Activated CD4-positive, alpha-beta T cell treated with anti-CD3 and anti-CD28 coated beads, Interleukin-2, amount 10 ng/mL, durations not matched to agents 7 days and 5 days (primary cell): ENCODE measurements at regions of chr1 and their contacts with region 1.

Region 1: GRCh38 chr1:207797229-207797961 is 45.5 kb downstream of the CD46 start:
- DNase-seq: peak; percentile 83
- H3K4me3 Mint-ChIP-seq: no peak overlapping the region
- H3K27ac Mint-ChIP-seq: no peak overlapping the region
- H3K4me1 Mint-ChIP-seq: peaks cover 35% of the 10 kb centered on the region
- H3K27me3 Mint-ChIP-seq: no peaks in the 10 kb centered on the region

Region 2: GRCh38 chr1:207628776-207629175 is 168.6 kb before region 1 on chr1:
- CTCF ChIA-PET with region 1: no interaction called
- POLR2A ChIA-PET with region 1: no interaction called
- DNase-seq: no peak
- H3K4me3 Mint-ChIP-seq: no peak overlapping the region
- H3K27ac Mint-ChIP-seq: no peak overlapping the region
- H3K4me1 Mint-ChIP-seq: no peaks in the 10 kb centered on the region
- H3K27me3 Mint-ChIP-seq: peaks cover 2% of the 10 kb centered on the region

Region 3: DNA sequence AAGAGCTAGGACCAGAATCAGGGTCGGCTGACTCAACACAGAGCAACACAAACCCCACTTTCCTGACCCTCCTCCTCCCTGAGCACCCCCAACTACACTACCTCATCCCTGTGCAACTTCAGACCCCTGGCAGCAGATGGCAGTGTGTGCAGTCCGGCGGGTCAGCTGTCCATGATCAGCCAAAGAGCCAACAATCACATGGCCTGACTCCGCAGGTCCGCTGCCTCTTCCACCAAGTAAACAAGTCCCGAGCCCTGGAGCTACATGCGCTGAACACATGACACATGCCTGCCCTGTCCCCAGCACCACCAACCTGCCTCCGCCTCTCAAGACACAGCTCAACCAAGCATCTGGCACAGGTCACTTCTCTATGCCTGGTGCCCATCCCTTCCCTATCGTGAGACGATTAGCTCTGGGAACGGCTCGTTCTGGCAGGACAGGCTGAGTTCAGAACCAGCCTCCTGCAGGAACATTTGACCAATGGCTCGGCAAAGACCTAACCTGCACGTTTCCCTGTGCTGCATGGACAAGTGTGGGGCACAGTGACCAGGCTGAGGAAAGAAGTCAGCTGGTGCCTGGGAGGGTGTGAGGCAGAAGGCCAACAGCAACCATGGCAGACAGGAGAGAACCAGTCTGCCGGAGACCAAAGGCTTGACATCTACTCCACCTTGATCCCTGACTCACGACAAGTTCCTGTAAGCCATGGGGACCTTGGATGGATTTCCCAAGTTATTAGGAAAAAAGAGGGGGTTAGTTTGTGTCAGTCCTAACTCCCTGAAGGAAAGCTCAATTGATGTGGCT is 14.7 kb after region 1 on chr1:
- CTCF ChIA-PET with region 1: interaction called, 24 read pairs
- POLR2A ChIA-PET with region 1: no interaction called
- DNase-seq: no peak
- H3K4me3 Mint-ChIP-seq: no peak overlapping the region
- H3K27ac Mint-ChIP-seq: no peak overlapping the region
- H3K4me1 Mint-ChIP-seq: peaks cover 56% of the 10 kb centered on the region
- H3K27me3 Mint-ChIP-seq: no peaks in the 10 kb centered on the region

Region 4: GRCh38 chr1:207818971-207819451 is 21.6 kb after region 1 on chr1:
- CTCF ChIA-PET with region 1: interaction called, 14 read pairs
- POLR2A ChIA-PET with region 1: no interaction called
- DNase-seq: no peak
- H3K4me3 Mint-ChIP-seq: no peak overlapping the region
- H3K27ac Mint-ChIP-seq: no peak overlapping the region
- H3K4me1 Mint-ChIP-seq: peaks cover 58% of the 10 kb centered on the region
- H3K27me3 Mint-ChIP-seq: peaks cover 2% of the 10 kb centered on the region